Activated CD8-positive, alpha-beta T cell treated with anti-CD3 and anti-CD28 coated beads, Interleukin-2, amount 10 ng/mL, durations not matched to agents 7 days and 5 days (primary cell): ENCODE measurements at regions of chr1 and their contacts with region 1.

Region 1: DNA sequence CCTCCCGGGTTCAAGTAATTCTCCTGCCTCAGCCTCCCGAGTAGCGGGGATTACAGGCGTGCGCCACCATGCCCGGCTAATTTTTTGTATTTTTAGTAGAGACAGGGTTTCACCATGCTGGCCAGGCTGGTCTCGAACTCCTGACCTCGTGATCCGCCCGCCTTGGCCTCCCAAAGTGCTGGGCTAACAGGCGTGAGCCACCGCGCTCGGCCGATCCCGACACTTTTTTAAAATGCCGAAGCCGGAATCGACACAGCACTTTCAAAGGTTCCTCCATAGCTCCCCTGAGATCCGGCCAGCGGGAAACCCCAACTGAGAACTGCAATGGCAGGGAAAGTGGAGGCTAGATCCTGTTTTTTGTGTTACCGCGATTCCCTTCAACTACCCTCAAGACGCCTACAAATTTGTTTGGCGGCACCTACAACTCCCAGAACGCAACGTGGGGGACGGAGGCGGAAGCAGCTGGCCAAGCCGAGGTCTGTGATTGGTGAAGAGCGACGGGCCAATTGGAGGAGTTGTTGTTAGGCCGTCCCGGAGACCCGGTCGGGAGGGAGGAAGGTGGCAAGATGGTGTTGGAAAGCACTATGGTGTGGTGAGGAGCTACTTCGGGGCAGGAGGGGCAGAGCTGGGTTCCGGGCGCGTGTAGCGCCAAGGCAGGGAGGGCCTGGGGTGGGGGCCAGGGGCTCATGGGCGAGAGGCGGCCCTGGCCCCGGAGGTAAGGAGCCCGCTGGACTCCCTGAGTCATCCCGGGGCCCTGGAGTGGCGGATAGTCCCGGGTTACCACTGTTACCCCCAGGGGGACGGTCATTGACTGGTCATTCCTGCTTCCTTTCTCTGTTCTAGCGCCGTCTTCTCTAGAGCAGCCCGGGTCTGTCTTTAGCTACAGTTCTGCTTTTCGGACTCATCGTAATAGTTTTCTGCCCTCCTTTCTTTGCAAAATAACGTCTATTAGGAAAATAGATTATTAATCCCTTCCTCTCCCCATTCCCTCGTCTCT is at the start of gene PSMD4:
- DNase-seq: peak; percentile 96
- ATAC-seq: peak; percentile 97
- H3K4me3 Mint-ChIP-seq: peak within 1 kb of the TSS; percentile 86
- H3K27ac Mint-ChIP-seq: peak within 1 kb of the TSS; percentile 89
- H3K4me1 Mint-ChIP-seq: peaks cover 28% of the 10 kb centered on the region
- H3K27me3 Mint-ChIP-seq: no peaks in the 10 kb centered on the region
- total RNA-seq, gene PSMD4: 194 to 210 TPM

Region 2: GRCh38 chr1:151189638-151190445 is 64.7 kb before region 1 on chr1 and contains the start of gene VPS72:
- CTCF ChIA-PET with region 1: interaction called, 17 read pairs
- POLR2A ChIA-PET with region 1: interaction called, 5 read pairs
- DNase-seq: peak; percentile 92
- ATAC-seq: peak; percentile 96
- H3K4me3 Mint-ChIP-seq: peak within 1 kb of the TSS; percentile 100
- H3K27ac Mint-ChIP-seq: peak within 1 kb of the TSS; percentile 99
- H3K4me1 Mint-ChIP-seq: peaks cover 28% of the 10 kb centered on the region
- H3K27me3 Mint-ChIP-seq: peaks cover 3% of the 10 kb centered on the region
- total RNA-seq, gene VPS72: 59.8 to 61.7 TPM

Region 3: GRCh38 chr1:151198255-151199127 is 56.0 kb before region 1 on chr1 and contains the start of gene PIP5K1A:
- CTCF ChIA-PET with region 1: interaction called, 14 read pairs
- POLR2A ChIA-PET with region 1: interaction called, 5 read pairs
- DNase-seq: peak; percentile 99
- ATAC-seq: peak; percentile 97
- H3K4me3 Mint-ChIP-seq: peak within 1 kb of the TSS; percentile 99
- H3K27ac Mint-ChIP-seq: peak within 1 kb of the TSS; percentile 97
- H3K4me1 Mint-ChIP-seq: peaks cover 41% of the 10 kb centered on the region
- H3K27me3 Mint-ChIP-seq: peaks cover 3% of the 10 kb centered on the region
- total RNA-seq, gene PIP5K1A: 64.9 to 69.2 TPM

Region 4: DNA sequence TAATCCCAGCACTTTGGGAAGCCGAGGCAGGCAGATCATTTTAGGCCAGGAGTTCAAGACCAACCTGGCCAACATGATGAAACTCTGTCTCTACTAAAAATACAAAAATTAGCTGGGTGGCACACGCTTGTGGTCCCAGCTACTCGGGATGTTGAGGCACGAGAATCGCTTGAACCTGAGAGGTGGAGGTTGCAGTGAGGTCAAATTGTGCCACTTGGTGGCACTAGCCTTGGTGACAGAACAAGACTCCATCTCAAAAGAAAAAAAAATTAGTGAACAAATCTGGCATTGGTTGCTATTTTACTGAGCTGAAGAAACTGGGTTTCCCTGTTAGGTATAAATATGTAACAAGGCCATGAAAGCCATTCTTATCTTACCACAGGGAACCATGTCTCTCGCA is 26.9 kb before region 1 on chr1:
- CTCF ChIA-PET with region 1: interaction called, 14 read pairs
- POLR2A ChIA-PET with region 1: no interaction called
- DNase-seq: no peak
- ATAC-seq: no peak
- H3K4me3 Mint-ChIP-seq: no peak overlapping the region
- H3K27ac Mint-ChIP-seq: no peak overlapping the region
- H3K4me1 Mint-ChIP-seq: no peaks in the 10 kb centered on the region
- H3K27me3 Mint-ChIP-seq: no peaks in the 10 kb centered on the region

Region 5: GRCh38 chr1:151243683-151244216 is 10.8 kb before region 1 on chr1:
- CTCF ChIA-PET with region 1: interaction called, 10 read pairs
- POLR2A ChIA-PET with region 1: no interaction called
- DNase-seq: no peak
- ATAC-seq: no peak
- H3K4me3 Mint-ChIP-seq: no peak overlapping the region
- H3K27ac Mint-ChIP-seq: no peak overlapping the region
- H3K4me1 Mint-ChIP-seq: no peaks in the 10 kb centered on the region
- H3K27me3 Mint-ChIP-seq: no peaks in the 10 kb centered on the region

Region 6: DNA sequence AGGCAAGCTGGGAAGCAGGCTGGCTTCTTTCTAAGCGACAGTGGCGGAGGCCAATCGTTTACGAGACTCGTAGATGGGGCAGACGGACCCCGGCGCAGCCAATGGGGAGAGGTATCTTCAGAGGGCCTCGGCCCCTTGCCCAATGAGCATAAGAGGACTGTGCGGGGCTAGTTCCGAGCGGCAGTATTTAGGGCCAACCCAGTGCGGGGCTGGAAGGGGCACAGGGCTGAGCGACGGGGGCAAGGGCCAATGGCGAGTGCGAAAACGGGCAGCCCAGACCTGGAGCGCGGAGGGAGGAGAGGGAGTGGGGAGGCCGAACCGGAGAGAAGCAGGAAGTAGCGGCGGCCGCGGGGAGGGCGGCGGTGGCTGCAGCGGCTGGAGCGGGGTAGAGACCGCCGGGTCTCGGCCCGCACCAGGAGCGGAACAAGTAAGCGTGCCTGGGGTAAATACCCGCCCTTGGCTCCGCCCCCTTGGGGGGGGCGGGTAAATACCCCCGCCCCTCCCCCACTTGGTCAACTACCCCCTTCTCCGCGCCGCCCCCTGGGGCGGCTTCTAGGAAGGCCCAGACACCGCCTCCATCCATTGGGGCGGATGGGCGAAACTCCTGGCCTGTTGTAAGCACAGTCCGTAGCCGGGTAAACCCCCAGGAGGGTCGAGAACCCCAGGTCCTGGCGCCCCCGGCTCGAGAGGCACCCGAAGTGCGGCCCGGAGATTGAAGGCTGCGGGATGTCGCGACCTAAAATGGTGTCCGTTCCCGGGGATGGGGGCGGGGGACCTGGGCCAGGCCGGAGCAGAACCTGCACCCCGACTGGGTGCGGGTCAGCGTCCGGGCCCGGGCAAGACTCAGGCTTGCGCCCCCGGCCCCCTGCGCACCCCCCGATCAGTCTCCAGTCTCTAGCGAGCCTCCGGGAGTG is 27.7 kb after region 1 on chr1 and contains the start of gene ZNF687:
- CTCF ChIA-PET with region 1: interaction called, 11 read pairs
- POLR2A ChIA-PET with region 1: interaction called, 15 read pairs
- DNase-seq: peak; percentile 99
- ATAC-seq: peak; percentile 94
- H3K4me3 Mint-ChIP-seq: peak within 1 kb of the TSS; percentile 98
- H3K27ac Mint-ChIP-seq: peak within 1 kb of the TSS; percentile 100
- H3K4me1 Mint-ChIP-seq: peaks cover 19% of the 10 kb centered on the region
- H3K27me3 Mint-ChIP-seq: no peaks in the 10 kb centered on the region
- total RNA-seq, gene ZNF687: 25.5 to 26.6 TPM